ENCODE measurements at regions of chr22 and their contacts with region 1.

Region 1: DNA sequence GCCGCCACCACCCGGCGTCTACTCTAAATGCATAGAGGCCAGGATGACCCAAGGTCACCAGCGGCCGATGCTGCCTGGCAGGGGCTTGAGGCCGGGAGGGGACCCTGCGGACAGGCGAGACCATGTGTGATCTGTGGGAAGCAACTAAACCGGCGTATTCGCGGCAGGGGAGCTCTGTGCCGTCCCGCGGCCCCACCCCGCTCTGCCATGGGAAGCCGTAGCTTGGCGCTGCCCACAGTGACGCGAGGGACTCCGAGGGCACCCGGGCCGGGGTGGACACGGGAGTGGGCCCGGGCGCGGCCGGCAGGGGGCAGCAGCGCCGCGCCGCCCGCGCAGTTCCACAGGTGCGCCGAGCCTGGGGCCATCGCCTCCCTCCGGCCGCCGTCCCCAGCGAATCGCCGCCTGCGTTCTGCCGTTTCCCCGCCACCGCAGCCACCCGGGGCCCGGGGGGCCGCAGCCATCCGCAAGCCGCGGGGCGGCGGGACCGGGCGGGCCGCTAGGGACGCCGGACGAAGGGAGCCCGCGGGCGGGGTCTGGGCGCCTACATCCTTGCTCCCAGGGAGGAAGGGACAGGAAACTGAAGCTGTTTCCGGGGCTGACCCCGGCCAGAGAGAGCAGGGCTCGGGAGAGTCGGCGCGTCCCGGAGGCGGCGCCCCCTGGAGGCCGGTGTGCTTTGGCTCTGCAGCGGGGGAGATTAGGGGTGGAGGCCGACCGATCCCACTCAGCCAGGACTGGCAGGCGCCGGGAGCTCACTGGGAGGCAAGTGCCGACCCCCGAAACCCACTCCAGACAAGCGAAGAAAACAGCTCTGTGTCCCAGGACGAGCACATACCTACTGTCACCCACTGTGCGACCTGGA is 12.5 kb upstream of the HDHD5 start:
- ATAC-seq: peak; percentile 95 to 98 (median 96)
- H3K4me3 ChIP-seq: peak overlapping the region; percentile 44 to 90 (median 70)
- H3K27ac ChIP-seq: peak overlapping the region; percentile 77 to 84
- H3K4me1 ChIP-seq: peaks cover 9 to 10% of the 10 kb centered on the region in 2 donors

Region 2: GRCh38 chr22:17303840-17304779 is 132.6 kb after region 1 on chr22:
- in situ Hi-C with region 1: no loop called
- ATAC-seq: peak in 1 of 8 experiments; percentile 74
- H3K4me3 ChIP-seq: no peak overlapping the region
- H3K27ac ChIP-seq: no peak overlapping the region
- H3K4me1 ChIP-seq: no peaks in the 10 kb centered on the region

Region 3: DNA sequence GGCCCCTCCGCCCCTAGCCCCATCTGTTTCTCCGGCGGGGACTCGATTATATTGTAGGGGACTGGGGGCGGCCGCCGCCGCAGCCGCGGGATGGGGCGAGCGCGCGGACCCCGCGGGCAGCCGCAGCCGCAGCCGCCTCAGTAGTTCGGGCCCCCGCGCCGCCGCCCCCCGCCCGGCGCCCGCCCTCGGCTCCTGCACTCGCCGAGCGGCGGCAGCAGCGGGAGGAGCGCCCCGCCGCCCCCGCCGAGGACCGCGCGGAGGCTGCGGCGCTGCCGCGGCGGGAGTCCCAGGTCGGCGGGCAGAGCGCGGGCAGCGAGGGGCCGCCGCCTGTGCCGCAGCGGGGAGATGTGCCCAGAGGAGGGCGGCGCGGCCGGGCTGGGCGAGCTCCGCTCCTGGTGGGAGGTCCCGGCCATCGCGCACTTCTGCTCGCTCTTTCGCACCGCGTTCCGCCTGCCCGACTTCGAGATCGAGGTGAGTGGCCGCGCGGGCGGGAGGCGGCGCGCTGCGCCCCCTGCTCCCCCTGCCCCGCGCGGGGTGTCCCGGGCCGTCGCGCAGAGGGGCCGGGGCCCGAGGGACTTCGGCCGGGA is 198.0 kb after region 1 on chr22 and contains the start of gene CECR2:
- in situ Hi-C with region 1: loop called in 1 of 9 experiments (anchors 10 kb)
- ATAC-seq: peak in 6 of 8 experiments; percentile 66 to 74 (median 70)
- H3K4me3 ChIP-seq: peak within 1 kb of the TSS; percentile 59 to 92 (median 67)
- H3K27ac ChIP-seq: peak within 1 kb of the TSS; percentile 97 to 100
- H3K4me1 ChIP-seq: peaks cover 9 to 16% of the 10 kb centered on the region in 2 donors
- total RNA-seq, gene CECR2: 0.09 to 18.4 (median 6.5) TPM

Region 4: DNA sequence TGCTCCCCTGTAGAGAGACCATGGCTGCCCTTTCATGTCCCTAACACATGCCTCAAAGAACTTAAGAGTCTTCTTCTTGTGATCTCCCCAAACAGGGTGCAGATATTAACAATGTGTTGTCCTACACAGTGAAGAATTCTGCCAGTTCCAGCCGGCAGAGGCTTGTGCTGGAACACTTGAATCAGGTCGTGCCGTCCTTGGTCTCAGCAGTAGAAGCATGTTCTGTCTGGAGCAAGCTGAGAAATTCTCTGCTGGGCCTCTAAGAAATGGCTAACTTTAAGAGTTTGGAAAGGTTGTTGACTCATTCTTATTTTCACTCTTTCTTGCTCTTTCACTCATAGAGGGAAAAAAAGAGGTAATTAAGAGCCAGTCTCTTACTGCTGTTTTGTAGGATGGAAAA is 320.7 kb after region 1 on chr22:
- in situ Hi-C with region 1: loop called in 6 of 9 experiments (anchors 10 to 25 kb)
- ATAC-seq: peak in 5 of 8 experiments; percentile 36 to 71 (median 62)
- H3K4me3 ChIP-seq: no peak overlapping the region
- H3K27ac ChIP-seq: peak overlapping the region in 1 of 2 donors; percentile 50
- H3K4me1 ChIP-seq: peaks cover 3 to 11% of the 10 kb centered on the region in 2 donors